Heart left ventricle (tissue), 16 donors: ENCODE measurements at regions of chr16 and their contacts with region 1.

Region 1: GRCh38 chr16:106623-107324 is 28.7 kb downstream of the MPG start:
- DNase-seq: peak in 3 of 5 donors; percentile 58 to 69 (median 59)
- ATAC-seq: peak in 3 of 4 donors; percentile 36 to 48 (median 39)
- H3K4me3 ChIP-seq: no peak overlapping the region
- H3K27ac ChIP-seq: no peak overlapping the region
- H3K4me1 ChIP-seq: peaks cover 0 to 23% (median 11%) of the 10 kb centered on the region in 12 donors
- H3K27me3 ChIP-seq: no peaks in the 10 kb centered on the region
- CTCF ChIP-seq: peak; percentile 69 to 89 (median 80)
- POLR2A ChIP-seq: no peak

Region 2: DNA sequence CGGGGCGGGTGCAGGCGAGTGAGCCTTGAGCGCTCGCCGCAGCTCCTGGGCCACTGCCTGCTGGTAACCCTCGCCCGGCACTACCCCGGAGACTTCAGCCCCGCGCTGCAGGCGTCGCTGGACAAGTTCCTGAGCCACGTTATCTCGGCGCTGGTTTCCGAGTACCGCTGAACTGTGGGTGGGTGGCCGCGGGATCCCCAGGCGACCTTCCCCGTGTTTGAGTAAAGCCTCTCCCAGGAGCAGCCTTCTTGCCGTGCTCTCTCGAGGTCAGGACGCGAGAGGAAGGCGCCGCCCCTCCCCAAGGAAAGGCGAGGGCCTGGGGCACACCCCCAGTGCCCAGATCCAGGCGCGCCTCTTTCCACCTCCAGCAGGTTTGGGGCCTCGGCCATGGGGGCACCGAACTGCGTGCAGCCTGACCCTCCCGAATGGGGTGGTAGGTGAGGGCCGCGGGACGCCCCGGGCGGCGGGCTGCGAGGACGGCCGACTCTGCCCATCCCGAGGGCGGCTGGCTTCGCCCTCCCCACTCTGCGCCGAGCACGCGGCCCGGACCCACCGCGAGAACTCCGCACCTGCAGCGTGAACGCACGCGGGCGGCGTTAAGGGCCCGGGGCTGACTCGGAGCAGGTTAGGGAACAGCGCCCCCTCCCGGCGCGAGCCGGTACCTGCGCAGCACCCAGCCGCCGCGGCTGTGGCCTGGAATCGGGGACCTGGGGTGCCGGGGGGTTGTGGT is 74.3 kb after region 1 on chr16:
- intact Hi-C with region 1: loop called in 7 of 10 experiments (anchors 1 to 5 kb)
- DNase-seq: peak; percentile 56 to 87 (median 67)
- ATAC-seq: peak in 3 of 4 donors; percentile 76 to 80 (median 79)
- H3K4me3 ChIP-seq: peak overlapping the region in 11 of 12 donors; percentile 6 to 45 (median 38)
- H3K27ac ChIP-seq: no peak overlapping the region
- H3K4me1 ChIP-seq: peaks cover 7 to 26% (median 12%) of the 10 kb centered on the region in 12 donors
- H3K27me3 ChIP-seq: peaks cover 25 to 44% (median 33%) of the 10 kb centered on the region in 9 donors
- CTCF ChIP-seq: peak; percentile 90 to 98 (median 94)
- POLR2A ChIP-seq: no peak

Region 3: DNA sequence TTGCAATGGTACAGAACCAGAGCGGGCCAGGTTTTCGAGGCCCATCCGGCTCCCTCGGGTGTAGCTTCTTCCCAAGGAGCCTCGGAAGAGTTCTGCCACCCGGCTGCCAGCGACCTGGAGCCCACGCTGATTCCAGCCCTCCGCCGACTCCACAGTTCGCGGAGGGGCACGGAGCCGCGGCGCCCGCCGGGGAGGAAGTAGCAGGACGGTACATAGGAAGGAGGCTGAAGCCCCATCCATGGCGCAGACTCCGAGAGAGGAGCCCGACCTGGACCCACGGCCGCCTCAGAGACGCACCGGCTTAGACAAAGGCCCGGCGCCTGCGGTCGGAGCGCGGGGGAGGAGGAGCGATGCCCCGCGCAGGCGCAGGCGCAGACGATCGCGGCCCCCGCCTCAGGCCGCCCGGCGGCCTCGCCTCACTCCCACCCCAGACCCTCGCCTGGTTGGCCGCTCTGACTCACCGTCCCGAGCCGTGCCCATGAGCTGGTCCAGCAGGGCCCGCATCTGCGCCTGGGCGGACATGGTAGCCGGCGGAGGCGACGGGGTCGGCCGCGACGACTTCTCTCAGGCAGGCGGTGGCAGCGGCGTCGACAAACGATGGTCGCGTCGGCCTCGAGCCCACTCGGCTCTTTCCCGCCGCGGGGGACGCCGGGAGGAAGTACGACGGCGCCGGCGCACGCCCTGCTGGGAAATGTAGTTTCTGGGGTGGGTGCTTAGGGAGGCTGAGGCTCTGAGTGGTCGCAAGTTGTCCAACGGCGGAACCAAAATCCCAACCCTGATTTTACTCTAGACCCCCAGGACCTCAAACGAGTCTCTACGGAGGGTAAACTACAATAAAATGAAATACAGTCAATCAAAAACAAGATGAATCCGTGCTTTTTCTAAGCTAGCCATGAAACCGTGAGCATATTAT is 122.3 kb after region 1 on chr16 and contains the start of gene LUC7L:
- intact Hi-C with region 1: loop called in 1 of 10 experiments (anchors 5 kb)
- DNase-seq: peak; percentile 90 to 94 (median 91)
- ATAC-seq: peak; percentile 90 to 97 (median 96)
- H3K4me3 ChIP-seq: peak within 1 kb of the TSS; percentile 56 to 93 (median 77)
- H3K27ac ChIP-seq: peak within 1 kb of the TSS; percentile 83 to 99 (median 96)
- H3K4me1 ChIP-seq: peaks cover 3 to 27% (median 15%) of the 10 kb centered on the region in 12 donors
- H3K27me3 ChIP-seq: no peaks in the 10 kb centered on the region
- CTCF ChIP-seq: no peak
- POLR2A ChIP-seq: peak; percentile 65 to 93
- total RNA-seq, gene LUC7L: 12.5 to 26.8 (median 19.4) TPM

Region 4: GRCh38 chr16:361872-362701 is 255.3 kb after region 1 on chr16:
- intact Hi-C with region 1: loop called in 4 of 10 experiments (anchors 1 to 5 kb)
- DNase-seq: peak; percentile 68 to 86 (median 73)
- ATAC-seq: peak; percentile 68 to 88 (median 79)
- H3K4me3 ChIP-seq: no peak overlapping the region
- H3K27ac ChIP-seq: no peak overlapping the region
- H3K4me1 ChIP-seq: no peaks in the 10 kb centered on the region
- H3K27me3 ChIP-seq: peaks cover 0 to 6% (median 0%) of the 10 kb centered on the region in 9 donors
- CTCF ChIP-seq: peak; percentile 53 to 79 (median 70)
- POLR2A ChIP-seq: no peak